HepG2 (cell line): ENCODE measurements at regions of chr5 and their contacts with region 1.

Region 1: GRCh38 chr5:73729329-73729728 is 103.3 kb downstream of the ARHGEF28 start:
- DNase-seq: peak; percentile 93
- ATAC-seq: peak; percentile 98
- H3K4me3 ChIP-seq: no peak overlapping the region; a peak in 1 of 6 replicates
- H3K27ac ChIP-seq: peak overlapping the region; percentile 68
- H3K4me1 ChIP-seq: peaks cover 67% of the 10 kb centered on the region
- H3K27me3 ChIP-seq: no peaks in the 10 kb centered on the region
- CTCF ChIP-seq: peak; percentile 31; the same call in 1 of the 2 replicates
- EP300 ChIP-seq: peak in 1 of 2 experiments; percentile 91; a peak in 2 of 4 replicates
- POLR2A ChIP-seq: no peak
- RAD21 ChIP-seq: no peak

Region 2: DNA sequence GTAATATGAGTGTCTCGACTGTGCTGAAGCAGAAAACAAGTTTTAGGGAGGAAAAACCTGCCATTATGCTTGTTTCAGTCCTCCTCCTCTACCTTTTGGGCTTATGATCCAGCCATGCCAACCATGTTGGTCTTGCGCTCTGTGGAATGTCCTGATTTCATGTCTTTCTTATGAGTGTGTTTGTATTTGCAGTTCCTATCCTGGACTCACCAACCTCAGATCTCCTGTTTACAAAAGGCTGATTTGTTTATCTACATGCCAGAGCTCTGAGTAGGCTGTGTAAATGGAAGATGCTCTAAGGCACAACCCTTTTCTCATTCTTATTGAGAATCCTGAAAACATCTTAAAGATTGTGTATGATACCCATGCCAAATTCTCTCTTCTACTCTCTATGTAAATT is 35.3 kb after region 1 on chr5:
- CTCF ChIA-PET with region 1: no interaction called
- POLR2A ChIA-PET with region 1: no interaction called
- in situ Hi-C with region 1: no loop called
- intact Hi-C with region 1: loop called (anchors 5 kb)
- DNase-seq: peak; percentile 78
- ATAC-seq: peak; percentile 70
- H3K4me3 ChIP-seq: no peak overlapping the region; a peak in 1 of 6 replicates
- H3K27ac ChIP-seq: peak overlapping the region; percentile 66
- H3K4me1 ChIP-seq: peaks cover 57% of the 10 kb centered on the region
- H3K27me3 ChIP-seq: no peaks in the 10 kb centered on the region
- CTCF ChIP-seq: no peak
- EP300 ChIP-seq: peak in 1 of 2 experiments; percentile 84; a peak in 2 of 4 replicates
- POLR2A ChIP-seq: no peak
- RAD21 ChIP-seq: no peak